ENCODE measurements at regions of chr9 and their contacts with region 1.

Region 1: GRCh38 chr9:86098824-86099700 is at the start of gene GOLM1:
- DNase-seq: peak; percentile 56 to 63
- ATAC-seq: peak; percentile 83 to 89
- H3K4me3 ChIP-seq: peak within 1 kb of the TSS; percentile 60
- H3K27ac ChIP-seq: peak within 1 kb of the TSS; percentile 85 to 96
- H3K4me1 ChIP-seq: peaks cover 49% of the 10 kb centered on the region
- CTCF ChIP-seq: no peak
- EP300 ChIP-seq: no peak
- POLR2A ChIP-seq: peak; percentile 60
- RAD21 ChIP-seq: no peak
- polyA plus RNA-seq, gene GOLM1: 126 and 145 TPM in 2 replicates

Region 2: GRCh38 chr9:86046930-86047341 is 52.1 kb before region 1 on chr9:
- CTCF ChIA-PET with region 1: no interaction called
- POLR2A ChIA-PET with region 1: no interaction called
- DNase-seq: no peak
- ATAC-seq: peak in 1 of 2 experiments; percentile 42; a peak in 1 of 6 replicates
- H3K4me3 ChIP-seq: no peak overlapping the region
- H3K27ac ChIP-seq: no peak overlapping the region
- H3K4me1 ChIP-seq: no peaks in the 10 kb centered on the region
- CTCF ChIP-seq: no peak
- EP300 ChIP-seq: no peak
- POLR2A ChIP-seq: no peak
- RAD21 ChIP-seq: no peak

Region 3: GRCh38 chr9:86126998-86127972 is 28.2 kb after region 1 on chr9:
- CTCF ChIA-PET with region 1: interaction called, 5 read pairs
- POLR2A ChIA-PET with region 1: interaction called, 12 read pairs
- DNase-seq: peak; percentile 94 to 98
- ATAC-seq: peak; percentile 98 to 99
- H3K4me3 ChIP-seq: no peak overlapping the region
- H3K27ac ChIP-seq: peak overlapping the region; percentile 55 to 71
- H3K4me1 ChIP-seq: peaks cover 24% of the 10 kb centered on the region
- CTCF ChIP-seq: no peak
- EP300 ChIP-seq: no peak
- POLR2A ChIP-seq: no peak
- RAD21 ChIP-seq: no peak; a peak in 1 of 5 replicates

Region 4: GRCh38 chr9:86230858-86231257 is 131.8 kb after region 1 on chr9:
- CTCF ChIA-PET with region 1: no interaction called
- POLR2A ChIA-PET with region 1: no interaction called
- DNase-seq: no peak
- ATAC-seq: no peak
- H3K4me3 ChIP-seq: no peak overlapping the region
- H3K27ac ChIP-seq: no peak overlapping the region
- H3K4me1 ChIP-seq: no peaks in the 10 kb centered on the region
- CTCF ChIP-seq: no peak
- EP300 ChIP-seq: no peak
- POLR2A ChIP-seq: no peak
- RAD21 ChIP-seq: no peak

Measured in A549 (cell line).